Right lobe of liver (tissue), 6 donors: ENCODE measurements at regions of chr17 and their contacts with region 1.

Region 1: DNA sequence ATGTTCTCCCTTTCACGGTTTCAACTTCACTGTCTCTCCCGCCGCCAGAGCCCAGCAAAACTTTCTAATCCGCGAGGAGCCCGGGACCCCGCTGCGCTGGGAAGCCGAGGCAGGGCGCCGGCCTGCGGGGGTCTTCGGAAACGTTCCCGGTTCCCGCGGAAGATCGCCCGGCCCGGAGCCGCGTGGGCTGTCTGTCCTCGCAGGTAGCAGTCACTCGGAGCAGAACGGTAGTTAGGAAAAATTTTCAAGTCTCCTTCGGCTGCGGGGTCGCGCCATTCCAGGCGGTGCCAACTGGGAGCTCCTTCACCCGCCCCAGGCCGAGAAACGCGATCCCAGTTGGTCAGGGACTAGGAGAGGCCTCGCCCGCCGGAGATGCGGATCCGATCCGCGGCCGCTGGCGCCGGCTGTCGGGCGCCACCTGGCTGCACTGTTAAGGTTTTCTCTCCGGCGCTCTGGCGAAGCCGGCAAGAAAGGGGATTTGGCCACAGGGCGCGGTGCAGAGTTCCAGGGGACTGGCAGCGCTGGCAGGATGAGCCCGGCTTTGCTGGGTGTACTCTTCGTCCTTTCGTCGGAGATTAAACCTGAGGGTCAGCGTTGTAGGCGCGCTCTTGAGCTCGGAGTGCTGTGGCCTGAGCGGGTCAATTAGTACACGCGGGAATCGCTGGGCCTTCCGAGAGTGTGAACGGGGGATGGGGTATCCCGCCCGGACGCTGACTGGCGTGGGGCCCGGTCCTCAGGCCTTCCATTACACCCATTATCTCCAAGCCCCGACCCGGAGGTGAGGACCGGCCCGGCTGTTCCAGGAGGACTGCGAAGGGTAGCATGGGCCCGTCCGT is 135.4 kb downstream of the KCNJ12 start:
- DNase-seq: peak; percentile 85 to 86 (median 85)
- ATAC-seq: peak; percentile 96 to 98 (median 96)
- H3K4me3 ChIP-seq: peak overlapping the region; percentile 31 to 53 (median 47)
- H3K27ac ChIP-seq: peak overlapping the region in 1 of 3 donors; percentile 13
- H3K4me1 ChIP-seq: peaks cover 0 to 12% (median 5%) of the 10 kb centered on the region in 4 donors
- H3K27me3 ChIP-seq: peaks cover 0 to 4% of the 10 kb centered on the region in 2 donors
- CTCF ChIP-seq: peak; percentile 63 to 90 (median 74)
- POLR2A ChIP-seq: no peak

Region 2: GRCh38 chr17:21318439-21318838 is 193.1 kb before region 1 on chr17:
- intact Hi-C with region 1: loop called in 1 of 2 experiments (anchors 10 kb)
- DNase-seq: no peak
- ATAC-seq: no peak
- H3K4me3 ChIP-seq: no peak overlapping the region
- H3K27ac ChIP-seq: no peak overlapping the region
- H3K4me1 ChIP-seq: peaks cover 0 to 6% (median 2%) of the 10 kb centered on the region in 4 donors
- H3K27me3 ChIP-seq: no peaks in the 10 kb centered on the region
- CTCF ChIP-seq: no peak
- POLR2A ChIP-seq: no peak

Region 3: GRCh38 chr17:21368545-21369246 is 142.9 kb before region 1 on chr17:
- intact Hi-C with region 1: no loop called
- DNase-seq: no peak
- ATAC-seq: no peak
- H3K4me3 ChIP-seq: no peak overlapping the region
- H3K27ac ChIP-seq: no peak overlapping the region
- H3K4me1 ChIP-seq: no peaks in the 10 kb centered on the region
- H3K27me3 ChIP-seq: no peaks in the 10 kb centered on the region
- CTCF ChIP-seq: no peak
- POLR2A ChIP-seq: no peak

Region 4: GRCh38 chr17:21457051-21458026 is 54.2 kb before region 1 on chr17:
- intact Hi-C with region 1: loop called in 1 of 2 experiments (anchors 10 kb)
- DNase-seq: peak; percentile 92 to 94 (median 93)
- ATAC-seq: peak; percentile 97 to 99 (median 98)
- H3K4me3 ChIP-seq: no peak overlapping the region
- H3K27ac ChIP-seq: no peak overlapping the region
- H3K4me1 ChIP-seq: peaks cover 0 to 3% (median 0%) of the 10 kb centered on the region in 4 donors
- H3K27me3 ChIP-seq: no peaks in the 10 kb centered on the region
- CTCF ChIP-seq: peak; percentile 89 to 97 (median 94)
- POLR2A ChIP-seq: no peak

Region 5: DNA sequence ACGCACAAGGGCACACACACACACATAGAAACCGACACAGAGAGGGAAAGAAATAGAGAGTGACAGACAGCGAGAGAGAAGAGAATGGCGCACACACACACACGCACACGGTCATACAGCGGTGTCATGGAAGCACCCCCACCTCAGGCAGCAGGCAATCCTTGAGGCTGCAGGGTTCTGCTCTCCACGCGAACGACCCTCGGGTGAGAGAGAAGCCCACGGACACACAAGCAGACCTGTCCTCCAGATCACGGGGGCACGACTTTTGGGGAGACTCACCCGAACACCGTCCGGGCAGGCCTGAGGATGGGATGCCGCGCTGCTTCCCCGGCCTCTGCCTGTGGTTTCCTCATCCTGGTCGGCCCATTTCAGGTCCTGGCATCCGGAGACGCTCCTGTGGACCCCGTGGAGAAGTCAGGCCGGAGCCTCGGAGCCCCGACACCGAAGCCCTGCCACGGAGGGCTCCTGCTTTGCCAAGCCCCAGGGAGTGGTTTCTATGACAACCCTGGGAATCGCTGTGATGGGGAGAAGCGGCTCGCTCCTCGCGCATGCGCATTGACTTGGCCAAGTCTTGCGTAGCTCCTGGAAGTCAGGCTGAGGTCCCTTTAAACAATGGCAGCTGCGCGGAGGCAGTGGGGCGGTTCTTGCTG is 62.5 kb after region 1 on chr17:
- intact Hi-C with region 1: no loop called
- DNase-seq: peak in 1 of 3 donors; percentile 44
- ATAC-seq: peak in 2 of 4 donors; percentile 29 to 45
- H3K4me3 ChIP-seq: peak overlapping the region; percentile 7 to 32 (median 9)
- H3K27ac ChIP-seq: no peak overlapping the region
- H3K4me1 ChIP-seq: no peaks in the 10 kb centered on the region
- H3K27me3 ChIP-seq: no peaks in the 10 kb centered on the region
- CTCF ChIP-seq: no peak
- POLR2A ChIP-seq: no peak

Region 6: GRCh38 chr17:21711182-21711581 is 199.6 kb after region 1 on chr17:
- intact Hi-C with region 1: no loop called
- DNase-seq: no peak
- ATAC-seq: no peak
- H3K4me3 ChIP-seq: no peak overlapping the region
- H3K27ac ChIP-seq: no peak overlapping the region
- H3K4me1 ChIP-seq: no peaks in the 10 kb centered on the region
- H3K27me3 ChIP-seq: no peaks in the 10 kb centered on the region
- CTCF ChIP-seq: no peak
- POLR2A ChIP-seq: no peak